ENCODE measurements at regions of chr4 and their contacts with region 1.

Region 1: DNA sequence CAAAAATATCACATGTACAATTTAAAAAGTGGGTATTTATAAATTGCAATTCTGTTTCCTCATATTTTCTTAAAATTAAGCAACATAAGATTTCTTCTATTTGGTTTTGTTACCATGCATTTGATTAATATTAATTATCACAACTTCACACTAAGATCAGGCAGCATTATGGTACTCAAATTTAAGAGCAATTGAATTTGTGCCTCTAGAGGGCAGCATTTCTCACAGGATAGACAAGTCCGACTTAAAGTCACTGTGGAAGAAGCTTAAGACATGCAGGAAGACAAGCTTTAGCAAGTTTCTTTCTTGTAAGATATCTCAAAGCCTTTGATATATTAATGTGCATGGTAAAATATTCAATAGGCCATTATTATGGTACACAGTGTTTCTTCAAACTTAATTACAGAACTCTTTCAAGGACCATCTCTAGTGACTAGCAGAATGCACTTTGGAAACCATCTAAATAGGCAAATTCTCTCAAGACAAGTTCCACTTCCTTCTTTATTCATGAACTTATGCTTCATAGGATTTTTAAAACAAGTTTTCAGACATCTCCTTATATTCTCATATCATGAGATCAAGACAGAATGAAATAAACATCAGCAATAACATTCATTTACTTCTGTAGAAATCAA is 35.0 kb downstream of the FBXW7 start:
- DNase-seq: peak; percentile 84
- H3K4me3 ChIP-seq: no peak overlapping the region
- H3K27ac ChIP-seq: no peak overlapping the region
- H3K4me1 ChIP-seq: peaks cover 6% of the 10 kb centered on the region
- H3K27me3 ChIP-seq: no peaks in the 10 kb centered on the region
- CTCF ChIP-seq: peak; percentile 54 to 57
- POLR2A ChIP-seq: no peak

Region 2: GRCh38 chr4:152408514-152409327 is 92.2 kb before region 1 on chr4:
- CTCF ChIA-PET with region 1: interaction called, 10 read pairs
- POLR2A ChIA-PET with region 1: no interaction called
- dilution Hi-C with region 1: no loop called
- intact Hi-C with region 1: no loop called
- DNase-seq: peak; percentile 42
- H3K4me3 ChIP-seq: no peak overlapping the region
- H3K27ac ChIP-seq: no peak overlapping the region
- H3K4me1 ChIP-seq: no peaks in the 10 kb centered on the region
- H3K27me3 ChIP-seq: no peaks in the 10 kb centered on the region
- CTCF ChIP-seq: peak; percentile 43 to 50
- POLR2A ChIP-seq: no peak

Region 3: GRCh38 chr4:152476796-152477195 is 24.1 kb before region 1 on chr4:
- CTCF ChIA-PET with region 1: interaction called, 13 read pairs
- POLR2A ChIA-PET with region 1: no interaction called
- dilution Hi-C with region 1: no loop called
- intact Hi-C with region 1: no loop called
- DNase-seq: no peak
- H3K4me3 ChIP-seq: no peak overlapping the region
- H3K27ac ChIP-seq: no peak overlapping the region
- H3K4me1 ChIP-seq: peaks cover 9% of the 10 kb centered on the region
- H3K27me3 ChIP-seq: no peaks in the 10 kb centered on the region
- CTCF ChIP-seq: no peak
- POLR2A ChIP-seq: no peak

Region 4: GRCh38 chr4:152524427-152524826 is 23.5 kb after region 1 on chr4:
- CTCF ChIA-PET with region 1: interaction called, 32 read pairs
- POLR2A ChIA-PET with region 1: no interaction called
- dilution Hi-C with region 1: no loop called
- intact Hi-C with region 1: no loop called
- DNase-seq: no peak
- H3K4me3 ChIP-seq: no peak overlapping the region
- H3K27ac ChIP-seq: no peak overlapping the region
- H3K4me1 ChIP-seq: peaks cover 18% of the 10 kb centered on the region
- H3K27me3 ChIP-seq: no peaks in the 10 kb centered on the region
- CTCF ChIP-seq: no peak
- POLR2A ChIP-seq: no peak

Region 5: GRCh38 chr4:152577708-152578396 is 76.9 kb after region 1 on chr4:
- CTCF ChIA-PET with region 1: interaction called, 15 read pairs
- POLR2A ChIA-PET with region 1: no interaction called
- dilution Hi-C with region 1: no loop called
- intact Hi-C with region 1: no loop called
- DNase-seq: no peak
- H3K4me3 ChIP-seq: no peak overlapping the region
- H3K27ac ChIP-seq: no peak overlapping the region
- H3K4me1 ChIP-seq: peaks cover 5% of the 10 kb centered on the region
- H3K27me3 ChIP-seq: peaks cover 0 to 3% of the 10 kb centered on the region in 2 experiments
- CTCF ChIP-seq: no peak
- POLR2A ChIP-seq: no peak

Region 6: GRCh38 chr4:152640058-152640833 is 139.3 kb after region 1 on chr4:
- CTCF ChIA-PET with region 1: interaction called, 139 read pairs
- POLR2A ChIA-PET with region 1: no interaction called
- dilution Hi-C with region 1: no loop called
- intact Hi-C with region 1: loop called (anchors 1 kb)
- DNase-seq: peak; percentile 30
- H3K4me3 ChIP-seq: no peak overlapping the region
- H3K27ac ChIP-seq: no peak overlapping the region
- H3K4me1 ChIP-seq: no peaks in the 10 kb centered on the region
- H3K27me3 ChIP-seq: no peaks in the 10 kb centered on the region
- CTCF ChIP-seq: peak in 1 of 2 donors; percentile 29
- POLR2A ChIP-seq: no peak

Region 7: DNA sequence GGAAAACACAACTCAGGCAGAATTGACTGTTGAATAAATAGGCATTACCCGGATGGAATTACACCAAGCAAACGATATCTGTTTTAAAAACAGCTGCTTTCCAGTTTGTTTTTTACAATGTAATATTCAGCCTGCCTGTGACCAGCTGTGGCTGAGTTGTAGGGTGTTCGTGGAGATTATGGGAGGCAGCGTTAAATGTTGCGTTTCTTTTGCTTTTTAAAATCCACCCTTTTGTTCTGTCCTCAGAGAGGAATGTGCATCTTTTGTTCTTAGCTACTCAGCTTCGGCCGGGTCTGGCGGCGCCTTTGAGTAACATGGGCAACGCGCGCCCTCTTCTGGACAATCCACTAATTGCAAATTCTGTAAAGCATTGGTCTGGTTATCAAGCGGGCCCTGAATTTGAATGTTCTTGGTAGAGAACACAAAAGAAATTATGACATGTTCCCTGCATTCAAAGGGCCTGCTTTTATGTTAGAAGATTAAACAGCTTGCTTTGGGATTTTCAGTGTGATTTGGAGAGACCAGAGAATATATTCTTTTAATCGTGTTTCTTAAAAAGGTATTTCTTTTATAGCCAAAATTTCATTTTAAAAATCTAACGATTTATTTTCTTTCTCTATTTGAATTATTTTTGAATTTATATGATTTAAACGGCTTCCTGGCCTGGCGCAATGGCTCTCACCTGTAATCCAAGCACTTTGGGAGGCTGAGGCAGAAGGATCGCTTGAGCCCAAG is 627.0 kb after region 1 on chr4:
- CTCF ChIA-PET with region 1: interaction called, 22 read pairs
- POLR2A ChIA-PET with region 1: no interaction called
- dilution Hi-C with region 1: no loop called
- intact Hi-C with region 1: no loop called
- DNase-seq: peak; percentile 86
- H3K4me3 ChIP-seq: peak overlapping the region in 1 of 3 experiments; percentile 31
- H3K27ac ChIP-seq: no peak overlapping the region
- H3K4me1 ChIP-seq: no peaks in the 10 kb centered on the region
- H3K27me3 ChIP-seq: no peaks in the 10 kb centered on the region
- CTCF ChIP-seq: peak; percentile 77 to 82
- POLR2A ChIP-seq: no peak

Measured in endothelial cell of umbilical vein (primary cell).